ENCODE measurements at regions of chr6 and their contacts with region 1.

Region 1: DNA sequence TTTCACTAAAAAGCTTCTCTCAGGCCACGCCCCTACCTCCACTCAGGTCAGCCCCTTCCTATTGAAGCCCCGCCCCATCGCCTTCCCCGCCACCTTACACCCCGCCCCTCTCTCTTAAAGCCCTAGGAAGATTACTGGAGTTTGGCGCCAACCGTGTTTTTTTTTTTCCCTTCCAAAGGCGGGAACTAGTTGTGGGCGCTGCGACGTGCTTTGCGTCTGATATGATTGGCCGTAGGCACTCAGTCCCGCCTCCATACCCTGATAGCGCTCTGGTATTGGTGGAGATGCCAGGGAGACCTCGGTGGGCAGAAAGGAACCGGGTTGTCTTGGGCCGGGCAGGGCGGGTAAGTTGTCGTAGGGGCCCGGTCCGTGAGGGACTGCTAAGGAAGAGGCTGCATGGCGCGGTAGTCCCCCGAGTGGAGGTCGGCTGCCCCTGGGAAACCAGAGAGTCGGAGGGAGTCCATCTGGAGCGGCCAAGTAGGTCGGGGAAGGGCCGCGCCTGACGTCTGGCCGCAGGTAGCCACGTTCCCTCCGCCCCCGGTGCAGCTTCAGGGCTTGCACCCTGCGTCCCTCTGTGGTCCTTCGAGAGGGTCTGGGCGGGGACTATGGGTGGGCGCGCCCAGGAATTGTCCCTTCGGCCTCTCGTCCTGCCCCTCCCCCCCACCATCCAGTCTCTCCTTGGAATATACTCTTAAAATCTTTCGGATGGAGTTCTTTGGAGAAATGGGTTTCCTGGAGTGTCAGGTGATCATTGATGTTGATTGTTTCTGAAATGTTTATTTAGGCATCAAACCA is at the start of gene CASP8AP2:
- DNase-seq: peak; percentile 98
- ATAC-seq: peak; percentile 99
- H3K4me3 ChIP-seq: peak within 1 kb of the TSS; percentile 78 to 95 (median 95)
- H3K27ac ChIP-seq: peak within 1 kb of the TSS; percentile 80
- H3K4me1 ChIP-seq: peaks cover 15% of the 10 kb centered on the region
- H3K27me3 ChIP-seq: no peaks in the 10 kb centered on the region
- CTCF ChIP-seq: no peak
- EP300 ChIP-seq: peak in 1 of 2 experiments; percentile 48; a peak in 1 of 4 replicates
- POLR2A ChIP-seq: peak; percentile 60 to 81
- RAD21 ChIP-seq: no peak
- total RNA-seq, gene CASP8AP2: 13.5 and 26.0 TPM in 2 replicates

Region 2: GRCh38 chr6:89805814-89806371 is 23.9 kb before region 1 on chr6:
- CTCF ChIA-PET with region 1: no interaction called
- POLR2A ChIA-PET with region 1: no interaction called
- in situ Hi-C with region 1: no loop called
- intact Hi-C with region 1: no loop called
- DNase-seq: no peak
- ATAC-seq: no peak
- H3K4me3 ChIP-seq: no peak overlapping the region
- H3K27ac ChIP-seq: no peak overlapping the region
- H3K4me1 ChIP-seq: no peaks in the 10 kb centered on the region
- H3K27me3 ChIP-seq: no peaks in the 10 kb centered on the region
- CTCF ChIP-seq: no peak
- EP300 ChIP-seq: no peak
- POLR2A ChIP-seq: no peak
- RAD21 ChIP-seq: no peak

Region 3: DNA sequence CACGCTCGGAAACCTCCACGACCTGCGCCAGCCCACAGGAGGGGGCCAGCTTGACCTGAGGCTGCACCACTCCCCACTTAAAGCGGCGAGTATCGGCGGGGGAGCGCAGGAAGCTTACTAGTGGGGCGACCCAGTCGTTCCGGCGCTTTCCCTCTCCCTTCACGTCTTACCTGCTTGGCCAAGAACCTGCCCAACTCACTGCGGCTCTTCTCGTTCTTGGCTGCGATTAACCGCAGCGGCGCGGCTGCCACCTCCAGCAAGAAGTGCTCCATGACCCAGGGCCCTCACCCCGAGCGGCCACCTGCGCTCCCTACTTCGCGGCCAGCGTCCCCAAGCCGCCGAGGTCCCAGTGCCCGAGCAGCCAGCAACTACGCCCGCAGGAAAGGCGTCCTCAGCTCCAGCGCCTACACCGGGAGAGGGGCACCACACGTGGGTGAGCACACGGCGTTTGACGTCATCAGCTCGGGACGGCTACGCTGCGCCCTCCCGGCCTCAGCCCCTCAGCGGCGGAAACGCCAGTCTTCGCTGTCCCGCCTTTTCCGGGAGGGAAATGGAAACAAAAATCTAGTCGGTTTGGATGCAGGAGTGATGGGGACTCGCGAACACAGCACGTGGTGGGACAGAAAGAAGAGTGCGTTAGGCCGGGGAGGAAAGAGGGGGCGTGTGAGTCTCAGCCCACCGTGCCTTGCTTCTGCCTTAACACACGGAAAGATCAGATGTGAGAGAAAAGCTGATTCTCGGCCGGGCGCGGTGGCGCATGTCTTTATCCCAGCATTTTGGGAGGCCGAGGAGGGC is 10.3 kb before region 1 on chr6 and contains the start of gene MDN1:
- CTCF ChIA-PET with region 1: no interaction called
- POLR2A ChIA-PET with region 1: interaction called, 52 read pairs
- in situ Hi-C with region 1: no loop called
- intact Hi-C with region 1: loop called (anchors 1 kb)
- DNase-seq: peak; percentile 91
- ATAC-seq: peak; percentile 97
- H3K4me3 ChIP-seq: peak within 1 kb of the TSS; percentile 78 to 91 (median 79)
- H3K27ac ChIP-seq: peak within 1 kb of the TSS; percentile 83
- H3K4me1 ChIP-seq: peaks cover 27% of the 10 kb centered on the region
- H3K27me3 ChIP-seq: no peaks in the 10 kb centered on the region; a peak in 1 of 5 replicates
- CTCF ChIP-seq: no peak; the same call in 1 of the 2 replicates
- EP300 ChIP-seq: 0 out of 4 replicates have a peak, but pooled peaks of 1 of the 2 experiments have one; percentile 30
- POLR2A ChIP-seq: peak; percentile 77 to 94
- RAD21 ChIP-seq: peak; percentile 23; the same call in 1 of the 2 replicates
- total RNA-seq, gene MDN1: 52.9 and 91.7 TPM in 2 replicates

Region 4: DNA sequence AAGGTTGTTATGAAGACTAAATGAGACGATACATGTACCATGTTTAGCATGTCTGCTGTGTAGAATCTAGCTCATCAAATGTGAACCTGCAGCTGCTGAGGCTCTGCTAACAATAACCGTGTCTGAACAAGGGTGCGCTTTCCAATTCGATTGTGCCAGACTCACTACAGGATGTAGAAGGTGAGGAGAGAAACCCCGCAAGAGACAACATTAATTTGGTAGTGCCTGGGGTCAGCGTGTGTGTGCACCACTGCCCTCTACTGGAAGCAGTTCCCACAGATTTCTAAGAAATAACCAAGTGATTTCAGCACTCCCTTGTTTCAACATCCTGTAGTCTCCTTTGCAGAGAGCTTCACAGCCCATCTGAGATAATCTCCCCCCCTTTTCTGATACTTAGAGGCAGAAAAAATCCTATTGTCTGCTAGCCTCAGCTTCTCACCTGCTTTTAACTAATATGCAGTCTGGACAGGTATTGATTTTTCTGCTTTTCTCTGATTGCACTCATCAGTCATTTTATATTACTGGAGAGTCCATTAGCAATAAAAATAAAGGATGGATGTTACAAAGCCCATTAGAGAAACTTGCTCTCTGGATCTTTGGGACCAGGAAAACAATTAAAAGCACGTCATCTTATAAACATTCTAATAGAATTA is 563.6 kb after region 1 on chr6:
- CTCF ChIA-PET with region 1: no interaction called
- POLR2A ChIA-PET with region 1: no interaction called
- in situ Hi-C with region 1: no loop called
- intact Hi-C with region 1: no loop called
- DNase-seq: peak; percentile 12
- ATAC-seq: peak; percentile 75
- H3K4me3 ChIP-seq: no peak overlapping the region
- H3K27ac ChIP-seq: no peak overlapping the region
- H3K4me1 ChIP-seq: no peaks in the 10 kb centered on the region
- H3K27me3 ChIP-seq: peaks cover 0 to 4% of the 10 kb centered on the region in 2 experiments; a peak in 1 of 5 replicates
- CTCF ChIP-seq: peak; percentile 67
- EP300 ChIP-seq: no peak
- POLR2A ChIP-seq: no peak
- RAD21 ChIP-seq: no peak

Measured in HepG2 (cell line).